Activated T-helper 1 cell treated with anti-CD3 and anti-CD28 coated beads, Interleukin-12 subunit alpha, Interleukin-12 subunit beta, Interleukin-2, Interleukin-4 antibody, amounts not matched to agents 30 ng/mL and 10 ng/mL and 1 ng/mL, durations not matched to agents 14 hours and 24 hours and 36 hours (primary cell): ENCODE measurements at regions of chr17 and their contacts with region 1.

Region 1: DNA sequence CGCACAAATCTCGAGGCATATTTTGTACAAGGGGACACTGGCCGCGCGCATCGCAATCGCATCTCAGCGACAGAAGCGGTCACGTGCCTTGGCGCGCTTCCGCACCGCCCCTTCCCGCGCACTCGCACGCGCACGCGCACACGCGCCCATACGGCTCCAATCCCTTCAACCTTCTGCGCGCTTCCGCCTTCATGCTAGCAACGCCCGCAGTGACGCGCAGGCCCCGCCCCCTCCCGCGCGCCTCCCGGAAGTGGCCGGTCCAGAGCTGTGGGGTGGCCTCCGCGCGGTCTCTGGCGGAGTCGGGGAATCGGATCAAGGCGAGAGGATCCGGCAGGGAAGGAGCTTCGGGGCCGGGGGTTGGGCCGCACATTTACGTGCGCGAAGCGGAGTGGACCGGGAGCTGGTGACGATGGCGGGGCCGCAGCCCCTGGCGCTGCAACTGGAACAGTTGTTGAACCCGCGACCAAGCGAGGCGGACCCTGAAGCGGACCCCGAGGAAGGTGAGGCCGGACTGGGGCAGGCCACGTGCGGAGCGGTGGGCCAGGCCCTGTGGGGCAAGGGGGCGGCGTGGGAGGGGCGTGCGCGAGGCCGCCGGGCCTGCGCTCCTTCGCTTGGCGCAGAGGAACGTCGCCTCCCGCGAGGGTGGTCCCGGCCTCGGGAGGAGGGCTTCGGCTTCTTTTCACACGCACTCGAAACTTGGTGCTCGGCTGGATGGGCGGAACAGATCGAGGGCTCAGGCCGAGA is at the start of gene AATF:
- DNase-seq: peak; percentile 98
- H3K4me3 Mint-ChIP-seq: peak within 1 kb of the TSS; percentile 97
- H3K27ac Mint-ChIP-seq: peak within 1 kb of the TSS; percentile 94
- H3K4me1 Mint-ChIP-seq: peaks cover 55% of the 10 kb centered on the region
- H3K27me3 Mint-ChIP-seq: peaks cover 40% of the 10 kb centered on the region
- total RNA-seq, gene AATF: 110 and 119 TPM in 2 replicates

Region 2: DNA sequence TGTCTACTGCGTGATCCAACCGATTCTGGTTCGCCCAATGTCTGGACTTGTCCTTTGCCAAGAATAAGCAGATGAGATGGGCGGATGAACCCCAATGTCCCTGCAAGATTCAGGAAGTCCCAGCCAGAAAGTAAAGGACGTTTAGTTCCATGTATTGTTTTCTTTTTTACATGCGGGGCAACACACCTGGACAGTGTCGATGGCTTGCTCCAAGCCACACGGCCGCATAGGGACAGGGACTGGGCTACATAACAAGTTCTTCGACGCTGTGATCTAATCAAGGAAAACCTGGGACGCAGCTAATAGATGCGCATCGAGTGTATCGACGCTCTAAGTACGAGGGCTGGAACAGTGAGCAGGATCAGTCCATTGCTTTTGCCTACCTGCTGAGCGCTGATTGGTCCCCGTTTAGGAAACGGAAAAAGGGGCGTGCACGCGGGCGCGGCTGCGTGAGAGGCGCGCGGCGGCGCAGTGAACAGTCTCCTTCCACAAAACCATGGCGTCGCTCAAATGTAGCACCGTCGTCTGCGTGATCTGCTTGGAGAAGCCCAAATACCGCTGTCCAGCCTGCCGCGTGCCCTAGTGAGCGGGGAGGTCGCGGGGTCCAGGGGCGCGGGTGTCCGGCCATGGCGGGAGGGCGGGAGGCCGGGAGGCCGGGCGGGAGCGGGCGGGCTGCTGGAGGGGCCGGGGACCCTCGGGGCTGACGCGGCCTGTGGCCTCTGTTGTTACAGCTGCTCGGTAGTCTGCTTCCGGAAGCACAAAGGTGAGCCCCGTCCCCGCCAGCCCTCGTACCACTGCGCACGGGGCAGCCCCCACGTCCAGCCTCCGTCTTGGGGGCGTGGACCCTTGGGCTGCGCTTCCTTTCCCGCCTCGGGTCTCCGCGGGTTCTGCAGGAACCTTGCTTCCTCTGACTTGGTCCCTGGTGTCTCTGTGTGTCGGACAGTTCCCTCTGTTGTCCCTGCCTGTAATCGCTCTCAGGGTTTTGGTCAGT is 462.4 kb before region 1 on chr17 and contains the start of gene ZNHIT3:
- intact Hi-C with region 1: loop called (anchors 1 kb)
- DNase-seq: peak; percentile 90
- H3K4me3 Mint-ChIP-seq: peak within 1 kb of the TSS; percentile 100
- H3K27ac Mint-ChIP-seq: peak within 1 kb of the TSS; percentile 99
- H3K4me1 Mint-ChIP-seq: peaks cover 50% of the 10 kb centered on the region
- H3K27me3 Mint-ChIP-seq: peaks cover 10% of the 10 kb centered on the region
- total RNA-seq, gene ZNHIT3: 46.2 and 50.5 TPM in 2 replicates

Region 3: GRCh38 chr17:36601303-36602029 is 347.4 kb before region 1 on chr17 and contains the start of gene MRM1:
- intact Hi-C with region 1: loop called (anchors 1 kb)
- DNase-seq: peak; percentile 85
- H3K4me3 Mint-ChIP-seq: peak within 1 kb of the TSS; percentile 91
- H3K27ac Mint-ChIP-seq: peak within 1 kb of the TSS; percentile 70
- H3K4me1 Mint-ChIP-seq: peaks cover 38% of the 10 kb centered on the region
- H3K27me3 Mint-ChIP-seq: no peaks in the 10 kb centered on the region
- total RNA-seq, gene MRM1: 21.0 and 22.7 TPM in 2 replicates

Region 4: DNA sequence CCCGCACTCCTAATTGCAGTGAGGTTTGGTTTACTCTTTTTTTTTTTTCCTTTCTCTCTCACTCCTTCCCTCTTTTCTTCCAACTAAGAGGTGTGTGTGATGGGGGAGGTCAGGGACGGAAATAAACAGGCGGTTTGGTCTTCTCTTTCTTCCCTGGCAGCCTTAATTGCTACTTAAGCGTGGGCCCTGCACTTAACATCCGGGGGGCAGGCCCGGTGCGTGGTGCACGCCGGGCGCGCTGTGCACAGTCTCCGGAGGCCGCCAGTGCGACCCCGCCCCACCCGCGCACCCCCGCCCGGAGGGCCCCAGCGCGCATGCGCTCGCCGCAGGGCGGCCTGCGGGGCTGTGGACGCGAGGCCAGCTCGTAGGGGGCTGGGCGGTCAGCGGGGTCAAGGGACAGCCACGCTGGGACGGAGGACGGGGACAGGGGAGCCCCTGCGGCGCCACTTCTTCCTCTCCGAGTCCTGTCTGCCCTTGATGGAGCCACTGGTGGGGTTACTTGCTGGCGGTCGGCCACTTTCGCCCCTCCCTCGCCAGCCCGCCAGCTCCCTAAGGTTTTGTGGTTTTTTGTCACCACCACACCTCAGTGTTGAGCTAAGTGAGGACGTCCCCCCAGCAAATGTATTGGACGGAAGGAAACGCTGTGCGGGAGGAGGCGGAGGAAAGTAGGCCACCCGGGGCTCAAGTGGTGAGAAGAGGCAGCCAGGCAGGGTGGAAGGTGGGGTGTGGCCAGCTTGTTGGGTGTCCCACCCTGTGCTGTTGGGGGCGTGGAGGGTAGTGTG is 226.6 kb before region 1 on chr17:
- intact Hi-C with region 1: loop called (anchors 1 kb)
- DNase-seq: peak; percentile 83
- H3K4me3 Mint-ChIP-seq: peak overlapping the region; percentile 79
- H3K27ac Mint-ChIP-seq: peak overlapping the region; percentile 95
- H3K4me1 Mint-ChIP-seq: peaks cover 56% of the 10 kb centered on the region
- H3K27me3 Mint-ChIP-seq: peaks cover 5% of the 10 kb centered on the region

Region 5: GRCh38 chr17:36972186-36972700 is 23.4 kb after region 1 on chr17:
- intact Hi-C with region 1: no loop called
- DNase-seq: no peak
- H3K4me3 Mint-ChIP-seq: no peak overlapping the region
- H3K27ac Mint-ChIP-seq: no peak overlapping the region
- H3K4me1 Mint-ChIP-seq: peaks cover 40% of the 10 kb centered on the region
- H3K27me3 Mint-ChIP-seq: no peaks in the 10 kb centered on the region

Region 6: DNA sequence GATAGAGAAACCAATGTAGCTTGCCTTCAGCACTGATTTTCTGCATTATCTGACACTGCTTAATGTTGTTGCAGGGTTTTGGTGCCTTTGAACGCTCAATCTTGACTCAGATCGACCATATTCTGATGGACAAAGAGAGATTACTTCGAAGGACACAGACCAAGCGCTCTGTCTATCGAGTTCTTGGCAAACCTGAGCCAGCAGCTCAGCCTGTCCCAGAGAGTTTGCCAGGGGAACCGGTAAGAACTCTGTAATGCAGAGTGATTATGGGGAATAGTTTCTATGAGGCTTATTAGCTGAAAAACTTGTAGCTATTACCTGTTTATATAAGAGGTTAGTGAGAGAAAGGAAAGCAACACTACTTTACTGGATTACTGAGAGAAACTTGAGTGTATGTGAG is 40.3 kb after region 1 on chr17:
- intact Hi-C with region 1: no loop called
- DNase-seq: no peak
- H3K4me3 Mint-ChIP-seq: no peak overlapping the region
- H3K27ac Mint-ChIP-seq: no peak overlapping the region
- H3K4me1 Mint-ChIP-seq: no peaks in the 10 kb centered on the region
- H3K27me3 Mint-ChIP-seq: no peaks in the 10 kb centered on the region

Region 7: DNA sequence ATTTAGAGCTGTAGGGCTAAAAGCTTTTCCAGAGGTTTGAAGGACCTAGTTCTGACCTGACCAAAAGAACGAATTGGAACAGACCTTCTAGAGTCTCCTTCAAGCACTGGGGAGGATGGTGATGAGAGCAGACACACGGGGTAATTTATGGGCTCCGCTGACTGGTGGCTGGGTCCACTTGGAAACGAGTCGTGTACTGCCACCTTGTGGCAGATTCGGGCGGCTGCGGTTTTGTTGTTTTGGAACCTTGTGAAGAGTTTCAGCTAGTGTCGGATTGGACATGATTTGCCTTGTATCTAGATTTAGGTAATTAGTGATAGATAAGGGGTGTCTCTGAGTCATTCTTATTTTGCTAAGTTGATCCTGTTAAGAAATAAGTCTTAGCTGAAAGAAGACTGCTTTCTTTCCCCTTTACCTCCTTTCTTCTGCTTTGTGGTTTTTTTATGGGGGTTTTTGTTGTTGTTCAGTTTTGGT is 98.8 kb after region 1 on chr17:
- intact Hi-C with region 1: loop called (anchors 1 kb)
- DNase-seq: peak; percentile 69
- H3K4me3 Mint-ChIP-seq: no peak overlapping the region
- H3K27ac Mint-ChIP-seq: peak overlapping the region; percentile 4
- H3K4me1 Mint-ChIP-seq: peaks cover 15% of the 10 kb centered on the region
- H3K27me3 Mint-ChIP-seq: no peaks in the 10 kb centered on the region

Region 8: DNA sequence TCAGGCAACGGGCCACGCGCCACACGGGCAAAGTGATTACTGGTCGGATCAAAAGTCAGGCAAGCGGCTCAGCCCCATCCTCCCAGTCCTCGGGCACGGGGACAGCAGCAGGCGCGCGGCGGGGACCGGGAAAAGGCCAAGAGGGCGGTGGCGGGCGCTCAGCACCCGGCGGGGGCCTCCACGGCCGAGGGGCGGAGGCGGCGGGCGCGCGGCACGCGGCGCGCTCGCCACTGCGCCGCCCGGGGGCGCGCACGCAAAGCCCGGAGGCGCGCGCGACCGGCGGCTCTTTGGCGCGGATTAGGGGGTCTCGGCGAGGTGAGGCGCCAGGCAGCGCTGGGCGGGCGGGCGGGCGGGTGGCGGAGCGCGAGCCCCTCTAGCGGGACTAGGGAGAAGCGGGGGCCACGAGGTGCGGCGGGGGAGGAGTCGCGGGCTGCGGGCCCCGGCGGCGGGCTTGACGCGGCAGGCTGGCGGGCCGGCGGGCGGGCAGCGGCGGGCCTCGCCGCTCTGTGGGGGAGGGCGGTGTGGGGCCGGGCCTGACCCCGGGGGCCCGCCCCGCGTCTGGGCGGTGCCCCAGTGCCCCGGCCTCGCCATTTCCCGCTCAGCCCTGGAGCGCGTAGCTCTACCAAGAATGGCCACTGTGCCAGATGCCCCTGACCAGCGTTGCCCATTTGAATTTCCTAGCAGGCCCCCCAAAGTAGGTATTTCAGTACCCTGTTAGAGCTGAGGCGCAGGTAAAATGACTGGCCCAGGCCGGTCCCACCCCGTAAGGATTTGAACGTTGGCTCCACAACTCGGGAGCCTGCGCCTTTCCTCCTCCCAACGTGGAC is 458.0 kb after region 1 on chr17 and contains the starts of genes ACACA and TADA2A:
- intact Hi-C with region 1: loop called (anchors 2 kb)
- DNase-seq: peak; percentile 75
- H3K4me3 Mint-ChIP-seq: peak within 1 kb of the TSS; percentile 99
- H3K27ac Mint-ChIP-seq: peak within 1 kb of the TSS; percentile 98
- H3K4me1 Mint-ChIP-seq: peaks cover 51% of the 10 kb centered on the region
- H3K27me3 Mint-ChIP-seq: no peaks in the 10 kb centered on the region
- total RNA-seq, gene ACACA: 110 and 122 TPM in 2 replicates
- total RNA-seq, gene TADA2A: 39.7 and 41.9 TPM in 2 replicates